ENCODE measurements at regions of chr4 and their contacts with region 1.

Region 1: GRCh38 chr4:30839583-30840520 is 119.7 kb downstream of the PCDH7 start:
- DNase-seq: no peak
- H3K4me3 ChIP-seq: no peak overlapping the region
- H3K4me3 Mint-ChIP-seq: no peak overlapping the region
- H3K27ac Mint-ChIP-seq: no peak overlapping the region
- H3K4me1 ChIP-seq: peaks cover 58% of the 10 kb centered on the region
- H3K4me1 Mint-ChIP-seq: peaks cover 40% of the 10 kb centered on the region
- H3K27me3 ChIP-seq: no peaks in the 10 kb centered on the region
- H3K27me3 Mint-ChIP-seq: no peaks in the 10 kb centered on the region
- CTCF ChIP-seq: no peak

Region 2: DNA sequence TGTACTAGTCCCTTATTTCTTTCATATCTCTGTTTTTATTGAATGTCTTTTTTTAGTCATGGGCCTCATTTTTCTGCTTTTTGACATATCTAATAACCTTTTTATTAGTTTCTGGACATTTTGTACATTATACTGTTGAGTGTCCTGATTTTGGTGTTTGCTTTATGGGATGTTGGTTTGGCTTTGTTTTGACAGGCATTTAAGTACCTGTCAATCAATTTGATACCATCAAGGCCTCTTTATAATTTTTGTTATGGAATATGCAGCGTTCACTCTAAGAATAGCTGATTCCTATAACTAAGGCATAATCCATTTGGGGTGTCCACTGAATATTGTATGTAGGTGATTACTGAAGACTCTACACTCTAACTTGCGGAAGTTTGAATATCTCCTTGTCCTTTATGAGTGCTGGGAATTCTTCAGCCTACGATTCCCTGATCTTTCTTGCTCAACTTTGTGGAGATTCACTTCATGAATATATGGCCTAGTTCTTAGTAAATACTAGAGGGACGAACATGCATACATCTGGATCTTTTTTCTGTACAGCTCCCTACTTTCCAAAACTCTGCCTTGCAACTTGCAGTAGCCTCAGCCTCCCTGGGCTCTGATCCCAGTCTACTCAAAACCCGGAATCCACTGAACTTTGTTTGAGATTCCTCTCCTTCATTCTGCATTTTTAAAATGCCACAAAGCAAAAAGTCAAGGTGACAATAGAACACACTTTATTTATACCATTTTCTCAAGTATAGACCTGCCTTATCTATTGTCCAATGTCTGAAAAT is 169.8 kb before region 1 on chr4:
- CTCF ChIA-PET with region 1: no interaction called
- POLR2A ChIA-PET with region 1: no interaction called
- intact Hi-C with region 1: no loop called
- DNase-seq: no peak
- H3K4me3 ChIP-seq: no peak overlapping the region
- H3K4me3 Mint-ChIP-seq: no peak overlapping the region
- H3K27ac Mint-ChIP-seq: no peak overlapping the region
- H3K4me1 ChIP-seq: no peaks in the 10 kb centered on the region
- H3K4me1 Mint-ChIP-seq: peaks cover 13% of the 10 kb centered on the region
- H3K27me3 ChIP-seq: no peaks in the 10 kb centered on the region
- H3K27me3 Mint-ChIP-seq: no peaks in the 10 kb centered on the region
- CTCF ChIP-seq: no peak

Region 3: GRCh38 chr4:30757357-30757756 is 82.5 kb before region 1 on chr4:
- CTCF ChIA-PET with region 1: interaction called, 3 read pairs
- POLR2A ChIA-PET with region 1: no interaction called
- intact Hi-C with region 1: loop called (anchors 1 kb)
- DNase-seq: peak; percentile 73 to 81
- H3K4me3 ChIP-seq: no peak overlapping the region
- H3K4me3 Mint-ChIP-seq: no peak overlapping the region
- H3K27ac Mint-ChIP-seq: no peak overlapping the region
- H3K4me1 ChIP-seq: peaks cover 62% of the 10 kb centered on the region
- H3K4me1 Mint-ChIP-seq: peaks cover 7% of the 10 kb centered on the region
- H3K27me3 ChIP-seq: no peaks in the 10 kb centered on the region
- H3K27me3 Mint-ChIP-seq: no peaks in the 10 kb centered on the region
- CTCF ChIP-seq: no peak

Region 4: GRCh38 chr4:30789219-30789671 is 50.6 kb before region 1 on chr4:
- CTCF ChIA-PET with region 1: no interaction called
- POLR2A ChIA-PET with region 1: no interaction called
- intact Hi-C with region 1: loop called (anchors 2 kb)
- DNase-seq: peak; percentile 47 to 63
- H3K4me3 ChIP-seq: no peak overlapping the region
- H3K4me3 Mint-ChIP-seq: peak overlapping the region; percentile 54
- H3K27ac Mint-ChIP-seq: peak overlapping the region; percentile 36
- H3K4me1 ChIP-seq: peaks cover 25% of the 10 kb centered on the region
- H3K4me1 Mint-ChIP-seq: peaks cover 12% of the 10 kb centered on the region
- H3K27me3 ChIP-seq: no peaks in the 10 kb centered on the region
- H3K27me3 Mint-ChIP-seq: no peaks in the 10 kb centered on the region
- CTCF ChIP-seq: no peak

Region 5: DNA sequence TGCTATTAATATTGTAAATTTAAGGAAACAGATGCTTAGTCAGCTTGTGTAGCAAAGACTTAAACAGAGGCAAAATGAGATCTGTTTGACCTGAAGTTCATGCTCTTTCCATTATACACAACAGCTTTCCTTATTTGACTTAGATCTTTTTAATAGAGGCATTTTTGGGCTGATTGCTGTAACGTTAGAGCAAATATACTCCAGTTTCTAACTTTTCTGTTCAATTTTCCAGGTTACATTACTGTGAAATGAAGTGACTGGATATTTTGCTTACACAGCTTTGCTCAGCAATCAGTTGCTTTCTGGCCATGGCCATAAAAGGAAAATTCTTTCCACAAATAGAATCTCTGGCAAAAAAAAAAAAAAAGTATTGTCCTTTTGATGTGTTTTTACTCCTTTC is 26.5 kb after region 1 on chr4:
- CTCF ChIA-PET with region 1: no interaction called
- POLR2A ChIA-PET with region 1: no interaction called
- intact Hi-C with region 1: loop called (anchors 1 kb)
- DNase-seq: peak in 1 of 2 experiments; percentile 5
- H3K4me3 ChIP-seq: no peak overlapping the region
- H3K4me3 Mint-ChIP-seq: peak overlapping the region; percentile 64
- H3K27ac Mint-ChIP-seq: peak overlapping the region; percentile 73
- H3K4me1 ChIP-seq: peaks cover 31% of the 10 kb centered on the region
- H3K4me1 Mint-ChIP-seq: peaks cover 30% of the 10 kb centered on the region
- H3K27me3 ChIP-seq: no peaks in the 10 kb centered on the region
- H3K27me3 Mint-ChIP-seq: no peaks in the 10 kb centered on the region
- CTCF ChIP-seq: no peak

Region 6: GRCh38 chr4:30950737-30951136 is 110.9 kb after region 1 on chr4:
- CTCF ChIA-PET with region 1: no interaction called
- POLR2A ChIA-PET with region 1: no interaction called
- intact Hi-C with region 1: loop called (anchors 5 kb)
- DNase-seq: peak; percentile 25 to 71
- H3K4me3 ChIP-seq: no peak overlapping the region
- H3K4me3 Mint-ChIP-seq: no peak overlapping the region
- H3K27ac Mint-ChIP-seq: peak overlapping the region; percentile 33
- H3K4me1 ChIP-seq: peaks cover 58% of the 10 kb centered on the region
- H3K4me1 Mint-ChIP-seq: peaks cover 39% of the 10 kb centered on the region
- H3K27me3 ChIP-seq: no peaks in the 10 kb centered on the region
- H3K27me3 Mint-ChIP-seq: no peaks in the 10 kb centered on the region
- CTCF ChIP-seq: no peak